ENCODE measurements at regions of chr4 and their contacts with region 1.

Region 1: DNA sequence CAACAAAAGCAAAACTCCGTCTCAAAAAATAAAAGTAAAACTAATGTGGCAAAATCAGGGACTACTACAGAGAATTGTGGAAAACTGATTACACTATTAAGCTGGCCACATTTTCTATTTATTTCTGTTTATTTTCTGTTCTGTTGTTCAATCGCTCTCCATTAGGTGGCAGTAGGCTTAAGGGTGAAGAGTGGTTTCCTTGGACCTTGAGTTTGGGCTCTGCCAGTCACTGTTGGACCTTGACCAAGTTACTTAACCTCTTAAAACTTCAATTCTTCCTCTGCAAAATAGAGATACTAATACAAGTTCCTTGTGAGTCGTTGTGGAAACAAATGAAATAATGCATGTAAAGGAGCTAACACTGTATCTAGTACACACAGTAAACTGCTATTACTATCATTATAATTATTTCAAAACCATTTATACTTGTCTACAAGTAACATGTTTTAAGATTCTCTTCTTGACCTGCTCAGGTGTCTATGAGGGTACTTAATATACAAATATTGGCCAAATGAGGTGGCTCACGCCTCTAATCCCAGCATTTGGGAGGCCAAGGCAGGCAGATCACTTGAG is 15.2 kb downstream of the HSD17B11 start:
- DNase-seq: no peak
- ATAC-seq: peak; percentile 94
- H3K4me3 ChIP-seq: no peak overlapping the region
- H3K27ac ChIP-seq: peak overlapping the region; percentile 20
- H3K4me1 ChIP-seq: no peaks in the 10 kb centered on the region
- H3K27me3 ChIP-seq: no peaks in the 10 kb centered on the region
- CTCF ChIP-seq: peak; percentile 76

Region 2: DNA sequence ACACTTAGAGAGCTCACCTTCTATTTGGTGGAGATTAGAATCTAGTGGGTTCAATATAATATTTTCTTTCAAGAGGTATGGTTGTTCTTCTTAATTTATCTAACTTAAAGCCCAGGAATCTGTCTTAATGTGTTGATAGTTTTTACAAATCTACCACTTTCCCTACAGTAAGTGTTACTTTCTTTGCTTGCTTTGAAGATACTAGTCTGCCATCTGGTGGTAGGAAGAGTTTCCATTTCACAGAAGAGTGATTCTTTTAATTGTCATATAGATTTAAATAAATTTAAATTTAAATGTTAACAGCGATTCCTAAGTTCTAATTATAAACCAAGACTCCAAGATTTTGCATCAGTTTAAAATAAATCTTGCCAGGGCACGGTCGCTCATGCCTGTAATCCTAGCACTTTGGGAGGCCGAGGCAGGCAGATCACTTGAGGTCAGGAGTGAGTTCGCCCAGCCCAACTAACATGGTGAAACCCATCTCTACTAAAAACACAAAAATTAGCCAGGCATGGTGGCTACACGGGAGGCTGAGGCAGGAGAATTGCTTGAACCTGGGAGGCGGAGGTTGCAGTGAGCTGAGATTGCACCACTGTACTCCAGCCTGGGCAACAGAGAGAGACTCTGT is 90.0 kb after region 1 on chr4:
- intact Hi-C with region 1: loop called (anchors 10 kb)
- DNase-seq: no peak
- ATAC-seq: peak; percentile 66
- H3K4me3 ChIP-seq: no peak overlapping the region
- H3K27ac ChIP-seq: no peak overlapping the region
- H3K4me1 ChIP-seq: no peaks in the 10 kb centered on the region
- H3K27me3 ChIP-seq: no peaks in the 10 kb centered on the region
- CTCF ChIP-seq: peak; percentile 69

Region 3: GRCh38 chr4:87679449-87680169 is 303.8 kb after region 1 on chr4:
- intact Hi-C with region 1: no loop called
- DNase-seq: no peak
- ATAC-seq: peak; percentile 72
- H3K4me3 ChIP-seq: no peak overlapping the region
- H3K27ac ChIP-seq: no peak overlapping the region
- H3K4me1 ChIP-seq: no peaks in the 10 kb centered on the region
- H3K27me3 ChIP-seq: no peaks in the 10 kb centered on the region
- CTCF ChIP-seq: peak; percentile 79

Measured in upper lobe of right lung (tissue), 1 donor.